Esophagus muscularis mucosa (tissue), 4 donors: ENCODE measurements at regions of chr15 and their contacts with region 1.

Region 1: GRCh38 chr15:78000091-78000926 is 77.2 kb downstream of the TBC1D2B start:
- DNase-seq: no peak
- H3K4me3 ChIP-seq: no peak overlapping the region
- H3K27ac ChIP-seq: no peak overlapping the region
- H3K4me1 ChIP-seq: peaks cover 19 to 49% (median 45%) of the 10 kb centered on the region in 4 donors
- H3K27me3 ChIP-seq: no peaks in the 10 kb centered on the region
- CTCF ChIP-seq: peak; percentile 27 to 52 (median 52)
- EP300 ChIP-seq: no peak
- POLR2A ChIP-seq: no peak

Region 2: DNA sequence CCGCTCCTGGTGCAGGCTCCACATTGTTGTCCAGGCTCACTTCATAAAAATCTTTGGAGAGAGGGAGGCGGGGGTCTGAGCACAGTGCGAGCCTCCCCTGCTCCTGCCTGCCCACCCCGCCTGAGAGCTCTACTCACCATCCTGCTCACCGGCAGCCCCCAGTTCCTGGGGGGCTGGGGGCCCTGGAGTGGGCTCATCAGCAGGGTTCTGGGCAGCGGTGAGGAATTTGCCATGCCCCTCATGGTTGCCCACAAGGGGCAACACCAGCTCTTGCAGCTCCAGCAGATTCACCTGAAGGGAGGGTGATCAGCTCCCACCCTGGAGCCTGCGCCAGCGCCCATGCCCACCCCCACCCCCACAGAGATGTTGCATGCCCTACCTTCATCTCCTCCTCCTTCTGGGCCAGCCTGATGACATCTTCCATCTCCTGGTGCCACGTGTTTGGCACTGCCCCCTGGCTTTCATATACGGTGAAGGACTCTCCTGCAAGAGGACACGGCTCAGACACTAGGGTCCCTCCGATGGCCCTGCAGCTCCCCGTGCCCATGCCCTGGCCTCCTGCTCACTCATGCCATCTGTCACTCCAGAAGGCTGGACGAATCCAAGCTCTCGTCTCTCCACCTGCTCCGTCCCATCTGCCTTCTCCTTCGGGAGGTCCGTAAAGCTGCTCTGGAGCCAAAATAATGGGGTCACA is 84.9 kb before region 1 on chr15:
- intact Hi-C with region 1: no loop called
- DNase-seq: no peak
- H3K4me3 ChIP-seq: no peak overlapping the region
- H3K27ac ChIP-seq: no peak overlapping the region
- H3K4me1 ChIP-seq: peaks cover 0 to 2% (median 0%) of the 10 kb centered on the region in 4 donors
- H3K27me3 ChIP-seq: no peaks in the 10 kb centered on the region
- CTCF ChIP-seq: no peak
- EP300 ChIP-seq: no peak
- POLR2A ChIP-seq: no peak

Region 3: GRCh38 chr15:77966540-77967290 is 33.6 kb before region 1 on chr15:
- intact Hi-C with region 1: loop called (anchors 5 kb)
- DNase-seq: no peak
- H3K4me3 ChIP-seq: no peak overlapping the region
- H3K27ac ChIP-seq: no peak overlapping the region
- H3K4me1 ChIP-seq: no peaks in the 10 kb centered on the region
- H3K27me3 ChIP-seq: no peaks in the 10 kb centered on the region
- CTCF ChIP-seq: peak; percentile 85 to 88 (median 86)
- EP300 ChIP-seq: no peak
- POLR2A ChIP-seq: no peak

Region 4: DNA sequence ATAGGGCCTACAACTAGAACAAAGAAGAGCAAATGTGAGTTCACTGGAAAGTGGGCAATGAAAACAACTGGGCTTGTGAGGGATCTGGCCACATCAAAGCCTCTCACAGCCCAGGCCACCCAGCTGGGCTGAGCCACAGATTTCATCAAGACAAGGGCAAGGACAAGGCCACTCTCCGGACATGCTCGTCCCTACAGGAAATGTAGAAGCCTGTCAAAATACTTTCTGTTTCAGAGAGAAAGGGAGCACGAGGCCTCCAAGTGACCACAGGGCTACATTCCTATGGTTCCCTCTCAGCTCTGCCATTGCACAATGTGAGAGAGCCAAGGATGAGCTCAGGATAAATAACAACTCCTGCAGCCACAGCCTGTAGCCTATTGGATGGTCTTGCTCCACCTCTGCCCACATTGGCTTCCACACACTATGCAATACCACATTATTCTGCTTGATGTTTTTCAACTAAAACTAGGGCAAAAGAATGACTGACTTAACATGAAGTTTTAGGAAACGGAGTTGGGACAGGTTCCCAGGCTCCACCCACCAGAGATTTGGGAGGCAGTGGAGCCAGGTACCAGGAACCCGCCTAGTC is 65.1 kb after region 1 on chr15:
- intact Hi-C with region 1: no loop called
- DNase-seq: peak; percentile 96
- H3K4me3 ChIP-seq: peak overlapping the region in 1 of 4 donors; percentile 5
- H3K27ac ChIP-seq: peak overlapping the region; percentile 64 to 85 (median 80)
- H3K4me1 ChIP-seq: peaks cover 87 to 100% (median 97%) of the 10 kb centered on the region in 4 donors
- H3K27me3 ChIP-seq: no peaks in the 10 kb centered on the region
- CTCF ChIP-seq: no peak
- EP300 ChIP-seq: no peak
- POLR2A ChIP-seq: no peak

Region 5: GRCh38 chr15:78077058-78077877 is 77.0 kb after region 1 on chr15 and contains the start of gene TBC1D2B:
- intact Hi-C with region 1: loop called (anchors 5 kb)
- DNase-seq: no peak
- H3K4me3 ChIP-seq: peak within 1 kb of the TSS; percentile 89 to 94 (median 90)
- H3K27ac ChIP-seq: peak within 1 kb of the TSS; percentile 89 to 93 (median 90)
- H3K4me1 ChIP-seq: peaks cover 21 to 57% (median 53%) of the 10 kb centered on the region in 4 donors
- H3K27me3 ChIP-seq: no peaks in the 10 kb centered on the region
- CTCF ChIP-seq: peak in 1 of 3 experiments; percentile 15
- EP300 ChIP-seq: no peak
- POLR2A ChIP-seq: no peak
- total RNA-seq, gene TBC1D2B: 31.3 to 58.8 (median 32.7) TPM

Region 6: GRCh38 chr15:78109877-78110530 is 109.7 kb after region 1 on chr15:
- intact Hi-C with region 1: no loop called
- DNase-seq: no peak
- H3K4me3 ChIP-seq: no peak overlapping the region
- H3K27ac ChIP-seq: no peak overlapping the region
- H3K4me1 ChIP-seq: peaks cover 0 to 9% (median 1%) of the 10 kb centered on the region in 4 donors
- H3K27me3 ChIP-seq: no peaks in the 10 kb centered on the region
- CTCF ChIP-seq: no peak
- EP300 ChIP-seq: no peak
- POLR2A ChIP-seq: no peak

Region 7: GRCh38 chr15:78457101-78457500 is 456.8 kb after region 1 on chr15:
- intact Hi-C with region 1: no loop called
- DNase-seq: no peak
- H3K4me3 ChIP-seq: no peak overlapping the region
- H3K27ac ChIP-seq: no peak overlapping the region
- H3K4me1 ChIP-seq: peaks cover 29 to 70% (median 68%) of the 10 kb centered on the region in 4 donors
- H3K27me3 ChIP-seq: no peaks in the 10 kb centered on the region
- CTCF ChIP-seq: no peak
- EP300 ChIP-seq: no peak
- POLR2A ChIP-seq: no peak